AG04450 (cell line): ENCODE measurements at regions of chr1 and their contacts with region 1.

Region 1: DNA sequence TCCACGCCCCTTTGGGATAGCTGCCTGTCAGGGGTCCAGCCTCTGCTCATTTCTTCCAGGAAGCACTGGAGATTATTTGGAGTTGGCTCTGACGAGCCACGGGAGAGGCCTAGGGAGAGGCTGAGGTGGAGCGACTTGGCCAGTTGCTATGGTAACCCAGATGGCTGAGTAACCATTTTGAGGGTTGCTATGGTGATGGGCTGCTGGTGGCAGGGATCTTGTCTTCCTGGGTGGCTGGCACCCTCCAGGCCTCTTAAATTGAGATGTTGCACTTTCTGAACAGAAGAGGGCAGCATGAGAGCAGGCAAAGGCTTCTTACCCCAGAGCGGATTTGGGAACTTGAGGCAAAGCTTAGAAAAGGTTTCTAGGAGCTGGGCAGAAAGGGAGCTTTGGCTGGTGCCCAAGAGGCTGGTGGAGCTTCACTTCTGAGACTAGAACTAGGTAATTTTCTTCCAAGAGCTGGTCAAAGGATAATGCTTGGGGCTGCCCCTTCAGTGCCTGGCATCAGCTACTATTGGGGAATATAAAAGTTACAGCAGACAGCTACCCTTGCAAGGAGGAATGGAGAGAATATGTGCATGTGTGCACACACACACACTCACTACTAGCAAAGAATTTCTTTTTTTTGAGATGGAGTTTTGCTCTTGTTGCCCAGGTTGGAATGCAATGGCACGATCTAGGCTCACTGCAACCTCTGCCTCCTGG is 72.5 kb downstream of the NDUFS5 start:
- DNase-seq: peak; percentile 82
- H3K4me3 ChIP-seq: no peak overlapping the region
- H3K27ac ChIP-seq: no peak overlapping the region
- H3K27me3 ChIP-seq: no peaks in the 10 kb centered on the region
- CTCF ChIP-seq: peak; percentile 80

Region 2: GRCh38 chr1:38834937-38835827 is 263.5 kb before region 1 on chr1:
- CTCF ChIA-PET with region 1: no interaction called
- POLR2A ChIA-PET with region 1: no interaction called
- DNase-seq: peak; percentile 68
- H3K4me3 ChIP-seq: no peak overlapping the region
- H3K27ac ChIP-seq: no peak overlapping the region
- H3K27me3 ChIP-seq: peaks cover 10% of the 10 kb centered on the region
- CTCF ChIP-seq: peak; percentile 83

Region 3: GRCh38 chr1:38875806-38876205 is 222.9 kb before region 1 on chr1:
- CTCF ChIA-PET with region 1: no interaction called
- POLR2A ChIA-PET with region 1: no interaction called
- DNase-seq: no peak
- H3K4me3 ChIP-seq: no peak overlapping the region
- H3K27ac ChIP-seq: no peak overlapping the region
- H3K27me3 ChIP-seq: no peaks in the 10 kb centered on the region
- CTCF ChIP-seq: no peak

Region 4: DNA sequence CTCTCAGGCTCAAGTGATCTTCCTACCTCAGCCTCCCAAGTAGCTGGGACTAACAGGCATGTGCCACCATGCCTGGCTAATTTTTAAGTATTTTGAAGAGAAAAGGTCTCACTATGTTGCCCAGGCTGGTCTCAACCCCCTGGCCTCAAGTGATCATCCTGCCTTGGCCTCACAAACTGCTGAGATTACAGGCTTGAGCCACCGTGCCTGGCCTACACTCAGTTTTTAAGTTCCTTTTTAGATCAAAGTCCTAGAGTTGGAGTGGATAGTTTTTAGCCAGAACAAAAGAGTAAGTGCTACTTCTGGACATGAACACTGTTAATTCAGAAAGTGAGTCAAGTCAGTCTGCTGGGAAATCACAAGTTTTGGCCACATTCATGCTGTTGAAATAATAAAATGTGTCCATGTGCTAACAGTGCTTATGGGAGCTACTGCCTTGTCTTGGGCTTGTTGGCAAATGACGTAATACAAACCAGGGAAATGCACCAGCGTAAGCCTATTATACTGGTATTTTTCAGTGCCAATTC is 11.7 kb after region 1 on chr1:
- CTCF ChIA-PET with region 1: interaction called, 15 read pairs
- POLR2A ChIA-PET with region 1: no interaction called
- DNase-seq: no peak
- H3K4me3 ChIP-seq: no peak overlapping the region
- H3K27ac ChIP-seq: peak overlapping the region; percentile 85
- H3K27me3 ChIP-seq: no peaks in the 10 kb centered on the region
- CTCF ChIP-seq: no peak

Region 5: DNA sequence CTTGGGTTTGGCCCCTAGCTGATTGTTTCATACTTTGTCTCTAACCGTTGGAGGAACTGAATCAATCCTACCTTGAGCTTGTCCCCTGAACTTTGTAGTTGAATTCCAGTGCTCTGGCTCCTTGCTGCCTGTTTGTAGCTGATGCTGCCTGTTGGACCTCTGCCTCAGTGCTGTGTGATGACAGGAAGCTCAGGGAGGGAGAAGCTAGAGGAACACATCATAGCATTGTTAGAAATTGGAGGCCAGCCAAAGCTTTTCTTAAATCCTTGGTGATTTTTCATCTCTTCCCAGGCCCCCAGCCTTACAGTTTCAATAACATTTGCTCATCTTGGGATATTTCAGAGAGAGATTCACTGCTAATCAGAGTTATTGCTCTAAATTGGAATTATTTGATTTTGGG is 139.8 kb after region 1 on chr1:
- CTCF ChIA-PET with region 1: interaction called, 10 read pairs
- POLR2A ChIA-PET with region 1: no interaction called
- DNase-seq: peak; percentile 54
- H3K4me3 ChIP-seq: no peak overlapping the region
- H3K27ac ChIP-seq: peak overlapping the region; percentile 21
- H3K27me3 ChIP-seq: no peaks in the 10 kb centered on the region
- CTCF ChIP-seq: no peak

Region 6: DNA sequence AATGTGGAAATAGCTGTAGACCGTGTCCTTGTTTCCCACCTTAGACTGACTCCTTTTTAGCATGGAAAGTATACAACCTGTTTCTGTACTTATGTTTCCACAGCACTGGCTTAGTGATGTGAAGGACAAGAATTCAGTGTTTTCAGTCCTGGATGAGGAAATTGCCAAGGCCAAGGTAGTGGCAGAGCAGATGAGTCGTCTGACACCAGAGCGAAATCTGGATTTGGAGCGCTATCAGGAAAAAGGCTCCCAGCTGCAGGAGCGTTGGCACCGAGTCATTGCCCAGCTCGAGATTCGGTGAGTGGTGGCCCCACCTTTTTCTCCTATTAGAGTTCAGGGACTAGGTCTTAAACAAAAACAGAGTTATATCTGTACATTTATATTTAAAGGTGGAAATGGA is 218.4 kb after region 1 on chr1:
- CTCF ChIA-PET with region 1: interaction called, 13 read pairs
- POLR2A ChIA-PET with region 1: no interaction called
- DNase-seq: no peak
- H3K4me3 ChIP-seq: no peak overlapping the region
- H3K27ac ChIP-seq: no peak overlapping the region
- H3K27me3 ChIP-seq: no peaks in the 10 kb centered on the region
- CTCF ChIP-seq: no peak

Region 7: GRCh38 chr1:39391691-39392679 is 293.3 kb after region 1 on chr1:
- CTCF ChIA-PET with region 1: interaction called, 19 read pairs
- POLR2A ChIA-PET with region 1: no interaction called
- DNase-seq: no peak
- H3K4me3 ChIP-seq: no peak overlapping the region
- H3K27ac ChIP-seq: peak overlapping the region; percentile 73
- H3K27me3 ChIP-seq: no peaks in the 10 kb centered on the region
- CTCF ChIP-seq: no peak

Region 8: DNA sequence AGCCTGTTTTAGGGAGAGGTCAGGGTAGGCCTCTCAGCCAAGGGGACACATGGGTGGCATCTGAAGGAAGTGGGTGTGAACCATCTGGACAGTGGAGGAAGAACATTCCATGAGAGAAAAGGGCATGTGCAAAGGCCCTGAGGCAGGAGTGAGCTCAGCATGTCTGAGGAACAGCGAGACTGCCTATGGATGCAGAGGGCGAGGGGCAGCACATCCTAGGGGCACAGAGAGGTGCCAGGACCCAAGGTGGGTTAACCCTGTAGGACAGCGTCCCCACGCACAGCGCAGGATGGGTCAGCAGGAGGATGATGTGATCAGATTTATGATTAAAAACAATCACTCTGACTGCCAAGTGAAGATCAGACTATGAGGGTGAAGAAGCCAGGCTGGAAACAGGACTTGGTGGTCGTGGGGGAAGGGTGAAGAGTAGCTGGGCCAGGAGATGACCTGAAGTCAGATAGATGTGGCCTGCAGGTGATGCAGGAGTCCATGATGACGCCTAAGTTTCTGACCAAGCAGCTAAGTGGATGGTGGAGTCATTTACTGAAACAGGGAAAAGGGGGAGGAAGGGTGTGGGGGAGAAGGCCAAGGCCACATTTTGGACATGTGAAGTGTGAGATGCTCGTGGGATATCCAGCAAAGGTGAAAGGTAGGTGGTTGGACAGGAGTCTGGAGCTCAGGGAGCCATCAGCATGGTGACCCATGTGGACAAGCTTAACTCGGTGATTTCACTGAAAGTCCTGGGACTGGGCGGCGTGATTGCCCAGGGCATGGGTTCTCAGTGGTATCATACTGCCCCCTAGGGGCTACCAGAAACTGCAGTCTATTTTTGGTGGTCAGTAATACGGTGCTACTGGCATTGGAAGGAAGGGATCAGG is 440.1 kb after region 1 on chr1:
- CTCF ChIA-PET with region 1: interaction called, 87 read pairs
- POLR2A ChIA-PET with region 1: no interaction called
- DNase-seq: peak; percentile 33
- H3K4me3 ChIP-seq: no peak overlapping the region
- H3K27ac ChIP-seq: no peak overlapping the region
- H3K27me3 ChIP-seq: no peaks in the 10 kb centered on the region
- CTCF ChIP-seq: peak; percentile 96